Cardiac septum (tissue), 1 donor: ENCODE measurements at regions of chr16 and their contacts with region 1.

Region 1: DNA sequence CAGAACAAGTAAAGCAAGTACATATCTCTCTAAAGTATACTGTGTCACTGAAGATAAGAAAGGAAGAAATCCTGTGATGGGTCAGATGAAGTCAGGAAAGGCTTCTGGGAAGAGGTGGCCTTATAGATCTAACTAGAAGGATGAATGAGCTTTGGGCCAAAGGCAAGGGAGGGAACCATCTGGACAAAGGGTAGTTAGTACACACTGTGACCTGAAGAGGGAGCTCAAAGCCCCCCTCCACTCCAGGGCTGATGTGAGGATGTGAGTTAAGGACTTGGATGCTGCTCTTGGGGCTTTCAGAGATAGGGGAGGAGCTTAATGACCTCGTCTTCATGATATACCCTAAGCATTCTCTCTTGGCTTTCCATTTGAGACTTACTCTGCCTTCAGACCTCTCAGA is 185.3 kb upstream of the CACNG3 start:
- DNase-seq: no peak

Region 2: DNA sequence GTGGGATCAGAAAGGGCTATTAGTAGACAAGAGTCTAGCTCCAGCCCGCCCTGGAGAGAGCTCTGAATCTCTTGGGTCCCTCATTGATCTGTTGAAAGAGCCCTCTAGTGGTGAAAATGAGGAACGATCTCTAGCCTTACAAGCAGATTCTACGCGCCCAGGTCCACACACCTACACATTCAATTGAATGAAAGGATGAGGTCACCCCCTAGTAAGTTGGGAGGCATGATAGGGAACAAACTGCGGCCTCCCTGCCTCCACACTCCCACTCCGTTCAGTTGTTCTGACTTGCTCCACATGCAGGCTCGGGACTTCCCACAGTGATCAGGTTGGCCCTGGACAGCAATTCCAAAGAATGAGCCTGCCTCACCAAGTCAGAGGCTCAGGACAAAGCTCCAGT is 182.3 kb after region 1 on chr16:
- intact Hi-C with region 1: loop called (anchors 2 kb)
- DNase-seq: no peak